BJ (cell line): ENCODE measurements at regions of chr12 and their contacts with region 1.

Region 1: GRCh38 chr12:118307069-118307954 is 65.4 kb downstream of the TAOK3 start:
- DNase-seq: peak; percentile 83
- H3K4me3 ChIP-seq: peak overlapping the region; percentile 43
- H3K27me3 ChIP-seq: no peaks in the 10 kb centered on the region
- CTCF ChIP-seq: no peak

Region 2: DNA sequence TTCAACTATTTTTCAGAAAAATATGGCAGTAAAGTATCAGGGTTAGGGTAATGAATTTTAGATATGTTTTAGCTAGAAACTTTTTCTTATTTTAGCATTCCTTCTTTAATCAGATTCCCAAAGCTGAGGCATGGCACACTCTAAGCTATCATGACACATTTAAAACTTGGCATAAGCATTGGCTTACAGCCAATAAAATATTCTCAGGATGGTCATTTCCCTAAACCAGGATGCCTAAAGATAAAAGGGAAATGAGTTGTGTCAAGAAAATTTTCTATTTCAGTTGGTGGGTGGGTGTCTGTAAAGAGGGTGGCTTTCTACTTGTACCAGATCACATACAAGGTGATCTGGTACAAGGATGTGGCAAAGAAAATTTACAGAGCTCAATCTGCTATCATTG is 123.6 kb before region 1 on chr12:
- CTCF ChIA-PET with region 1: interaction called, 3 read pairs
- POLR2A ChIA-PET with region 1: interaction called, 38 read pairs
- DNase-seq: no peak
- H3K4me3 ChIP-seq: no peak overlapping the region
- H3K27me3 ChIP-seq: no peaks in the 10 kb centered on the region
- CTCF ChIP-seq: no peak

Region 3: DNA sequence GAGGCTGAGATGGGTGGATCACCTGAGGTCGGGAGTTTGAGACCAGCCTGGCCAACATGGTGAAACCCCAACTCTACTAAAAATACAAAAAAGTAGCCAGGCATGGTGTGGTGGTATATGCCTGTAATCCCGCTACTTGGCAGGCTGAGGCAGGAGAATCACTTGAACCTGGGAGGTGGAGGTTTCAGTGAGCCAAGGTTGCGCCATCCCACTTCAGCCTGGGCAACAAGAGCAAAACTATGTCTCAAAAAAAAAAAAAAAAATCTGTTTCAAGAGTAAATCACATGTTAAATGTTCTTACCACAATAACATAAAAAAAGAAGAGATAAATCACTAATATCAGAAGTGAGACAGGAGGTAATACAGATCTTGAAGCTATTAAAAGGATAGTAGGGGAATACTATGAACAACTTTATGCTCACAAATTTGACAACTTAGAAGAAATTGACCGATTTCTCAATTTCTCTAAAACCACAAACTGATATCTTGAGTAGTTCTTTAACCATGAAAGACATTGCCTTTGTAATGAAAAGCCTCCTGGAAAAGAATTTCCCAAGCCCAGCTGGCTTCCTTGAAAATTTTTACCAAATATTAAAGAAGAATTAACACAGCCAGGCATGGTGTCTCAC is 27.7 kb after region 1 on chr12:
- CTCF ChIA-PET with region 1: no interaction called
- POLR2A ChIA-PET with region 1: interaction called, 12 read pairs
- DNase-seq: no peak
- H3K4me3 ChIP-seq: no peak overlapping the region
- H3K27me3 ChIP-seq: no peaks in the 10 kb centered on the region
- CTCF ChIP-seq: no peak

Region 4: GRCh38 chr12:118357257-118358007 is 50.1 kb after region 1 on chr12:
- CTCF ChIA-PET with region 1: no interaction called
- POLR2A ChIA-PET with region 1: interaction called, 11 read pairs
- DNase-seq: no peak
- H3K4me3 ChIP-seq: no peak overlapping the region
- H3K27me3 ChIP-seq: no peaks in the 10 kb centered on the region
- CTCF ChIP-seq: no peak